Dendritic cell treated with granulocyte-macrophage colony-stimulating factor and Interleukin-4, amounts not matched to agents 40 ng/mL and 50 ng/mL, for 4 days (primary cell): ENCODE measurements at regions of chr13 and their contacts with region 1.

Region 1: DNA sequence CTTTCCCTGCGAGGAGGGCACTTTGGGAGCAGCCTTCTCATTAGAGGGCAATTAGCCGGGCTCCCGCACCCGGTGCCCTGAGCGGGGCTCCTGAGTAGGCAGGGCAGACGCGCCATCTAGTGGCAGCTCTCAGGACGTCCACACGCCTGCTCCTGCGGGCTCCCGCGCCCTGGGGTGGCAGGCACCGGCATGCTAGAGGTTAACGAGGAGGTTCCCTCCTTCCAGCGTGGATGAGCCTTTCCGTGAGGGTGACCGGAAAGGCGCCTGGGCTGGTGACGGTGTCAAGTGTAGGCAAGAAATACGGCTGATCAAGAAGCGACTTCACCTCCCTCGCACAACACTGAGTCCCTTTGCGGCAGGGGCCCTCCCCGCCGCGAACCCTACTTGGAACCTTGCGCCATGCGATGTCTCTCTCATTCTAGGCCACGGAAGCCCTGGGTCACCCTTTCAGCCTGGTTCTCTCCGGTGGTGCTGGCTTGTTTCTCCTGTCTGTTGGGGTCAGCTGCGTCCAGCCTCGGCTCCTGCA is 67.7 kb downstream of the ALOX5AP start:
- H3K4me3 Mint-ChIP-seq: peak overlapping the region; percentile 69
- H3K27ac Mint-ChIP-seq: peak overlapping the region; percentile 27
- H3K4me1 Mint-ChIP-seq: peaks cover 33% of the 10 kb centered on the region
- H3K27me3 Mint-ChIP-seq: peaks cover 18% of the 10 kb centered on the region

Region 2: DNA sequence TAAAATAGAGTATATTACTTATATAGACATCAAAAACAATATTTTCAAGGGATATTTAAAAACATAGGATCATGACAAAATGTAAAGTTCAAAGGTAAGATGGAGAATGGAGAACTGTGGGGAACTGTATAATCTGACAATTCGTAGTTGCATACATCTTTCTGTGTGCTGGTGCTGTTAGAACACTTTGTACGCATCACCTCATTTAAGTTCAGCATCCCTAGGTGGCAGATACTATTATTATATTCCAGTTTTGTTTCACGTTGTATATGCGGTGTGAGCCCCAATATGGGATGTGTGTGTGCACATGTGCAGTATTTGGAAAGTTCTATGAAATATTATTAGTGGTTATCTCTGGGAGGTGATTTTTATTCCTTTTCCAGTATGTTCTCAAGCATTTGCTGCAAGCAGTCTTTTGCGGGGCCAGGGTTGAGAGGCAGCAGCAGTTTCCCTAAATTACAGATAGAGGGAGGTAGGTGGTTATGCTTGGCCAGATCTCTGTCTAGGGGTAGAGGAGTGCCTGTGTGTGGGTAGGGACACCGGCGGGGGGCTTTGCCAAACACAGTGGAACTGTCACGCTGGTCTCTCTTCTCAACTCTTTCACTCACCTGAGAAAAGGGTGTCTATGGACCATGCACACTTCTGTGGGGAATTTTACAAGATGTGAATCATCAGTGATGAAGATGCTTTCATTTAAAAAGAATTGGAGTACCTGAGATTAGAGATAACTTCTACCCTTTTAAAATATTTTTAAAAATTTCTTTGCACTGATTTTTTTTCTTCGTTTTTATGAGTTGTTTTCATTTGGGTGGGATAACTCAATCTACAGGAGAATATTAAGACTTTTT is 123.3 kb before region 1 on chr13:
- intact Hi-C with region 1: loop called (anchors 5 kb)
- H3K4me3 Mint-ChIP-seq: no peak overlapping the region
- H3K27ac Mint-ChIP-seq: no peak overlapping the region
- H3K4me1 Mint-ChIP-seq: peaks cover 24% of the 10 kb centered on the region
- H3K27me3 Mint-ChIP-seq: peaks cover 8% of the 10 kb centered on the region

Region 3: GRCh38 chr13:31221057-31221456 is 418.0 kb after region 1 on chr13:
- intact Hi-C with region 1: no loop called
- H3K4me3 Mint-ChIP-seq: no peak overlapping the region
- H3K27ac Mint-ChIP-seq: no peak overlapping the region
- H3K4me1 Mint-ChIP-seq: peaks cover 4% of the 10 kb centered on the region
- H3K27me3 Mint-ChIP-seq: no peaks in the 10 kb centered on the region